PC-9 (cell line): ENCODE measurements at regions of chr15 and their contacts with region 1.

Region 1: DNA sequence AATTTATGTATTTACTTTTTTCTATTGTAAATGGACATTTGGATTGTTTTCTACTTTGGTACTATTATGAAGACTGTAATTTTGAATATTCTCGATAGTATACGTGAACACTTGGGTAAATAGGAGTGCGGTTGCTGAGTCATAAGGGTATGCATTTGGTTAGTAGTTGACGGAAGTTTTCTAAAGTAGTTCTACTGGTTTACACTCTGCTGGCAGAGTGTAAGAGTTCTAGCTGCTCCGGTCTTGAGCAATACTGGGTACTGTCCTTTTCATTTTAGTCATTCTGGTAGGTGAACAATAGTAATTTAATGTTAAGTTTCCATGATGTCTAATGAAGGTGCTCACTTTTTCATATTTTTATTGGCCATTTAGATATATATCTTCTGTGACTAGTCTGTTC is 70.0 kb downstream of the MEF2A start:
- DNase-seq: peak; percentile 25 to 92
- H3K4me3 ChIP-seq: no peak overlapping the region
- H3K27ac ChIP-seq: peak overlapping the region; percentile 53
- H3K4me1 ChIP-seq: peaks cover 22% of the 10 kb centered on the region
- H3K27me3 ChIP-seq: no peaks in the 10 kb centered on the region
- CTCF ChIP-seq: no peak

Region 2: DNA sequence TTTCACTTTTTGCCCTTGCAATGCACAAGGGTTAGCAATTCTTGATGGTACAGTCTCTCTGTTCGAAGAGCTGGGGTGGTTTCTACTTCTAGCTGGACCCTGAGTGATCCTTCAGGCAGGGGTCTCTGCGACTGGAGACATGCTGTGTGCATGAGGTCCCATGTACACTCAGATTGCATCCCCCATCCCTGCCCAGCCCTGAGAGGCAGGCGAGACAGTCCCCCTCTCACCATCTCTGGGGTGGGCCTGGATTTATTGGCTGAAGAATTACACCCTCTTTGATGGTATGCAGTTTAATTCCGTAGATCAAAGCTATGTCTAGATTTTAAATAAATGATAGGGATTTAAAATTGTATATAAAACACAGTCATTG is 219.0 kb before region 1 on chr15:
- CTCF ChIA-PET with region 1: no interaction called
- POLR2A ChIA-PET with region 1: interaction called, 11 read pairs
- intact Hi-C with region 1: no loop called
- DNase-seq: no peak
- H3K4me3 ChIP-seq: no peak overlapping the region
- H3K27ac ChIP-seq: no peak overlapping the region
- H3K4me1 ChIP-seq: no peaks in the 10 kb centered on the region
- H3K27me3 ChIP-seq: no peaks in the 10 kb centered on the region
- CTCF ChIP-seq: no peak